GM10248 (cell line): ENCODE measurements at regions of chr20 and their contacts with region 1.

Region 1: GRCh38 chr20:45044084-45044573 is 56.8 kb downstream of the KCNS1 start:
- DNase-seq: peak; percentile 40
- CTCF ChIP-seq: peak; percentile 61

Region 2: GRCh38 chr20:45020236-45020886 is 23.8 kb before region 1 on chr20:
- CTCF ChIA-PET with region 1: interaction called, 10 read pairs
- POLR2A ChIA-PET with region 1: interaction called, 3 read pairs
- DNase-seq: no peak
- CTCF ChIP-seq: no peak

Region 3: DNA sequence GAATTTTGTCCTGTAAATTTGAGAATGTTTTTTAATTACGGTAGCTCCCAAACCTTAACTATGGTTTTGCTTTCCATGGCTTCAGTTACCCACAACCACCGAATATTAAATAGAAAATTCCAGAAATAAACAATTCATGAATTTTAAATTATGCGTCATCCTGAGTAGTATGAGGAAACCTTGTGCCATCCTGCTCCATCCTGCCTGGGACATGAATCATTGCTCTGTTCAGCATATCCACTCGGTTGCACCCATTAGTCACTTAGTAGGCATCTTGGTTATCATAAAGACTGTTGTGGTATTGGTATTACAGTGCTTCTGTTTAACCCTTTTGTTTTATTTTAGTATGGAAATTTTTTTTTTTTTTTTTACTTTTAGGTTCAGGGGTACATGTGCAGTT is 17.1 kb after region 1 on chr20:
- CTCF ChIA-PET with region 1: interaction called, 60 read pairs
- POLR2A ChIA-PET with region 1: no interaction called
- DNase-seq: no peak
- CTCF ChIP-seq: no peak

Region 4: DNA sequence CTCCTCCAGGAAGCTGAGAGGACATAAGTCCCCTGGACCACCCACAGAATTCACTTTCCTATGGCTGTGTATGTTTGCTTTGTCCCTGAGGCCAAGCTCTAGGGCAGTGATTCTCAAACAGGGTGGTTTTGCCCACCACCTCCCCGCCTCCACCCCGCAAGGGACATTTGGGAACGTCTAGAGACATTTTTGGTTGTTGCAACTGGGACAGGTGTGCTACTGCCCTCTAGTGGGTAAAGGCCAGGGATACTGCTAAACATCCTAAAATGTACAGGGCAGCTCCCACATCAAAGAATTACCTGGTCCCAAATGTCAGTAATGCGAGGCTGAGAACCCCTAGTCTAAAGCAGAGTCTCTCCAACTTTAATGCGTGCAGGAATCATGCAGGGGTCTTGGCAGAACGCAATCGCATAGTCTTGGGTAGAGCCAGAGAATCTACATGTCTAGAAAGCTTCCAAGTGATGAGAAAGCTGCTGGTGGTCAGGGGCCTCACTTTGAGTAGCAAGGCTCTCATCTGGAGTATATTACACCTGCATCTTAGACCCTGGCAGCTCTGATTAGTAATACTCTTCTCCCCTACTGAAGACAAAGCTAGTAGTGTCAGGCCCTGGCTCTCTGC is 51.7 kb after region 1 on chr20:
- CTCF ChIA-PET with region 1: interaction called, 80 read pairs
- POLR2A ChIA-PET with region 1: no interaction called
- DNase-seq: peak; percentile 69
- CTCF ChIP-seq: peak; percentile 77

Region 5: DNA sequence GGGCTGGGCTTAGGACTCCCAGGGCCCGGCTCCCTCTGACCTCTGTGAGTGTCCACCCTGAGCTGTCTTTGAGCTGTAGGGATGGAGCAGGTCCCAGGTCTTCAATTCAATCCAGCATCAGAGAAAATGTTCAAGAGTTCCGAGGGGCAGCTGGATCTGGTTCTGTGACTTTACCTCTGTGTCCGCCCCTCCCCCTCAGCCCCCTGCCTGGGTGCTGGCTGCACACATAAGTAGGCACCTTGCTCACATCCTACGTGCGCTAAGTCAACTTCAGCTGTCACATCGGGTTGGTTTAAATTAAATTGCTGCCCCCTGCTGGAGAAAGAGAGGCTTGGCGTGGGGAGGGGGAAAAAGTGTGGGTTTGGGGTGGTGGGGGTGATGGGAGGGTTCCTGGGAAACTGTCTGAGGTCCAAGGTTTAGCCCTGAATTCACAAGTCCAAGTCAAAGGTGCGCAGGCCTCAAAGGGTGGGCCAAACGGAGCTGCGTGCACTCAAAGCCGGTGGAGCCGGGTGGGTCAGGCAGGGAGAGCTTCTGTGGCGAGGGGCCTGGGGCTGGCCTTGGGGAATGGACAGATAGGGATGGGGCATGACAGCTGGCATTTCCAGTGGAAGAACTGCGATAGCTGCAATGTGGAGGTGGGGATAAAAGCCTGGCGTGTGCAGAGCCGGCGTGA is 67.8 kb after region 1 on chr20:
- CTCF ChIA-PET with region 1: interaction called, 38 read pairs
- POLR2A ChIA-PET with region 1: no interaction called
- DNase-seq: no peak
- CTCF ChIP-seq: peak; percentile 47

Region 6: GRCh38 chr20:45235995-45236394 is 191.9 kb after region 1 on chr20:
- CTCF ChIA-PET with region 1: no interaction called
- POLR2A ChIA-PET with region 1: no interaction called
- DNase-seq: no peak
- CTCF ChIP-seq: peak; percentile 24

Region 7: DNA sequence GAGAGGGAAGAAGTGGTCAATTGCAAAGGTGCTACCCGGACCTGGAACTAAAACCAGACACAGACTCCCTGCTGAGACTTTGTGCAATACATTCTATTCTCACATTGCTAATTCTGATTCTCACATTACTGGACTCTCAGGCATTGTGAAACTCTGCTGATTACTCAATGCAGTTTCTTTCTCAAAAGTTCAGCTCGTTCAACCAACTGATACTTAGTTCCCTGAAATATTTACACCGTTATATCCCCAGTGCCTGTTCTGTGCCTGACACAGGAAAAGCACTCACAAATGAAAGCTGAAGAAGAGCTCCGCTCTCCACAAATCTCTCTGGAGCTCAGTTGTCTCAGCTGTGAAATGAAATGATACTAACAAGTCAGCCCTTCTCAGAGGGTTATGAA is 210.7 kb after region 1 on chr20:
- CTCF ChIA-PET with region 1: no interaction called
- POLR2A ChIA-PET with region 1: no interaction called
- DNase-seq: peak; percentile 24
- CTCF ChIP-seq: no peak